Prostate gland (tissue), 2 donors: ENCODE measurements at regions of chr6 and their contacts with region 1.

Region 1: DNA sequence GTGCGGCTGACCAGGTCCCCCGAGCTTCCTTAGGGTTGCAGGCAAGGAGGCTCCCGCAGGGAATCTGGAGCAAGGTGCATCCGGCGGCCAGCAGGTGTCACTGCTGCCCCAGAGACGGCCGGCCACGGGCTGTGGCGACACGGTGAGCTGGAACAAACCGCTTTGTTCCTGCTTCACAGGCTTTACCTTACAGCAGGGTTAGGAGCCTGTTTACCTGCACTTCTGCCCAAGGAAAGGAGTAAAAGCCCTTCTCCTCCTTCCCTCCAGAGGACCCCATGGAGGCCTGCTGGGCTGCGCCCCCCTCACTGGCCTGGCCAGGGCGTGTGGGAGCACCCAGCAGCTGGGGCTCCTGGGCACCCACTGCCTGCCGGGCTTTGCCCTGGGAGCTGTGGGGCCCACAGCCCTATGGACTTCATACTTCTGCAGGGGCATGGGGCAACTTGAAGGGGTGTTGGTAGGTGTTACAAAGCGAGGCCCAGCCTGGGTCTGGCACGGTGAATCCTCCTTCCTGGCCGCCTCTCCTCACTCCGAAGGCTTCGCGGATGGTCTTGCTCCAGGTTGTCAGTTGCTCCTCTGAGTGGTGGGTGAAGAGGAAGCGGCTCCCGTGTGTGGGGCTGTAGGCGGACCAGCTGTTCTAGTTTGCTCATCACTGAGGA is 88.4 kb downstream of the CDC5L start:
- DNase-seq: peak; percentile 77
- H3K4me3 ChIP-seq: no peak overlapping the region
- H3K27ac ChIP-seq: peak overlapping the region in 1 of 2 donors; percentile 59
- H3K4me1 ChIP-seq: peaks cover 9% of the 10 kb centered on the region
- H3K27me3 ChIP-seq: no peaks in the 10 kb centered on the region
- CTCF ChIP-seq: peak; percentile 75 to 98 (median 96)
- POLR2A ChIP-seq: no peak

Region 2: GRCh38 chr6:44636561-44637248 is 160.8 kb after region 1 on chr6:
- intact Hi-C with region 1: loop called (anchors 5 kb)
- DNase-seq: peak; percentile 20
- H3K4me3 ChIP-seq: no peak overlapping the region
- H3K27ac ChIP-seq: no peak overlapping the region
- H3K4me1 ChIP-seq: no peaks in the 10 kb centered on the region
- H3K27me3 ChIP-seq: no peaks in the 10 kb centered on the region
- CTCF ChIP-seq: no peak
- POLR2A ChIP-seq: no peak

Region 3: GRCh38 chr6:45714741-45715507 is 1239.0 kb after region 1 on chr6:
- intact Hi-C with region 1: loop called (anchors 2 kb)
- DNase-seq: peak; percentile 77
- H3K4me3 ChIP-seq: no peak overlapping the region
- H3K27ac ChIP-seq: no peak overlapping the region
- H3K4me1 ChIP-seq: no peaks in the 10 kb centered on the region
- H3K27me3 ChIP-seq: no peaks in the 10 kb centered on the region
- CTCF ChIP-seq: peak; percentile 39 to 87 (median 72)
- POLR2A ChIP-seq: no peak

Region 4: DNA sequence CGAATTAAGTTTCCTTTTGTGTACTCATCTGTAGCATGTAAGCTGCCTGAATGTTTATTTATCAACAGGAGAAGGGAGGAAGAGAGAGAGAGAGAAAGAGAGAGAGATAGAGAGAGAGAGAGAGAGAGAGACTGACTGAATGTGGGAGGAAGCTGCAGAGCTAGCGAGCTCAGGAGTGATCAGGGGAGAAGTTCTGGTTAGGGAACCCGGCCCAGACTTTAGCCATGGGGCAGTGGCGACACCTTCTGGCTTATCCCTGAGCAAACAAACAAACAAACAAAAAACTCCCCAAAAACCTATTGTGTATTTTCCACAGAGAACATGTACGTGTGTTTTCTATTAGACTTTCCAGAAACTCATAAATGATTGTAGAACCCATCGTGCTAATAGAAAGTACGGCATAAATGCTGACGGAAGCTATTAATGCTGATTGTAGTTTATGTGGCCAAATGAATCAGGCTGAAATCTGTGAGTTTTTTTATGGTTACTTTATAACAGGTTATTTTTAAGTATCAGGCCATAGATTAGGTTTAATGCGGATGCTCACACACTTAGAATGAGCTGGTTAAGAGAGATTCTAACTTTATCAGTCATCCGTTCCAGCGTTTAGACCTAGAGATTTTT is 1446.9 kb after region 1 on chr6:
- intact Hi-C with region 1: loop called (anchors 5 kb)
- DNase-seq: peak; percentile 58
- H3K4me3 ChIP-seq: no peak overlapping the region
- H3K27ac ChIP-seq: no peak overlapping the region
- H3K4me1 ChIP-seq: no peaks in the 10 kb centered on the region
- H3K27me3 ChIP-seq: no peaks in the 10 kb centered on the region
- CTCF ChIP-seq: peak; percentile 39 to 80 (median 70)
- POLR2A ChIP-seq: no peak